ENCODE measurements at regions of chr4 and their contacts with region 1.

Region 1: DNA sequence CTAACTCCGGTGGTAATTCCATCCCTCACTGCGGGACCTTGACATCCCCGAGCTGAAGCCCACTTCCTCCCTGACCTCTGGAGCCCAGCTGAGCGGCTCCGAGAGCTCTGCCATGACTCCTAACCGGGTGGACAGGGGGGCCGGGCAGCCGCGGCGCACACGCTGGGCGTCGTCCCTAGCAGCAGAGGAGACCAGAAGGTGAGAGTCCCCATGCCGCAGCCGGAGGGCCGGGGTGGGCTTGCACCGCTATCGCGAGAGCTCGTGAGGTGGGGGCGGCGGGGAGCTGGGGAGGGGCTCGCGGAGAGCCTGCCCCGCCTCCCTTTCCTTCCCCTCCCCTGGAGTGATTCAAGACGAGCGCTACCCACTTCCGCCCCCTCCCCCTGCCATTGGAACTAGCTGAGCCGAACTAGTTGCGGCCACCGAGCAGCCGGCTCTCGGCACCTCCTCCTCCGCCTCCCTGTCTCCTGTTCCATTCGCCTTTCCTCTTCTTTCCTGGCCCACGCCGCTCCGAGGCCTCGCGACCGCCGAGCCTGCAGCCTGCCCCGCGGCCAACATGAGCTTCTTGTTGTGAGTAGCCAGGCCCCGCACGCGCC is at the start of gene MOB1B:
- DNase-seq: peak; percentile 94
- total RNA-seq, gene MOB1B: 23.0 TPM

Region 2: GRCh38 chr4:70704331-70705145 is 197.5 kb before region 1 on chr4:
- intact Hi-C with region 1: loop called (anchors 2 kb)
- DNase-seq: peak; percentile 90

Region 3: DNA sequence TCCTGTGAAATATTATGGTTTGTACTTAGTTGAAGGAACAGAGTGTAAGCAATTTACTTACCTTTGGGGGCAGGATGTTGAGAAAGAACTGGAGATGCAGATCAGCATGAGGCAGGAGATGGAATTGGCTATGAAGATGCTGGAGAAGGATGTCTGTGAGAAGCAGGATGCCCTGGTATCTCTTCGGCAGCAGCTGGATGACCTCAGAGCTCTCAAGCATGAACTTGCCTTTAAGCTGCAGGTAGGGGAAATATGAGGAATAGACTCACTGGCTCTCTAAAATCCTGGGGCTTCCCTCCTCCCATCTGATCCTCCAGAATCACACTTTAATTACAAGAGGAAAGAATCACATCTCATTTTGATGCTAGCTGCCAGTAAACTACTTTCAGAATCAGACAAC is 113.3 kb before region 1 on chr4:
- intact Hi-C with region 1: no loop called
- DNase-seq: no peak

Region 4: GRCh38 chr4:70993181-70994068 is 91.3 kb after region 1 on chr4 and contains the start of gene DCK:
- intact Hi-C with region 1: loop called (anchors 5 kb)
- DNase-seq: peak; percentile 95
- total RNA-seq, gene DCK: 7.1 TPM

Measured in cardiac septum (tissue), 1 donor.